Activated T-helper 1 cell treated with anti-CD3 and anti-CD28 coated beads, Interleukin-12 subunit alpha, Interleukin-12 subunit beta, Interleukin-2, Interleukin-4 antibody, amounts not matched to agents 30 ng/mL and 10 ng/mL and 1 ng/mL, durations not matched to agents 14 hours and 24 hours and 36 hours (primary cell): ENCODE measurements at regions of chr2 and their contacts with region 1.

Region 1: DNA sequence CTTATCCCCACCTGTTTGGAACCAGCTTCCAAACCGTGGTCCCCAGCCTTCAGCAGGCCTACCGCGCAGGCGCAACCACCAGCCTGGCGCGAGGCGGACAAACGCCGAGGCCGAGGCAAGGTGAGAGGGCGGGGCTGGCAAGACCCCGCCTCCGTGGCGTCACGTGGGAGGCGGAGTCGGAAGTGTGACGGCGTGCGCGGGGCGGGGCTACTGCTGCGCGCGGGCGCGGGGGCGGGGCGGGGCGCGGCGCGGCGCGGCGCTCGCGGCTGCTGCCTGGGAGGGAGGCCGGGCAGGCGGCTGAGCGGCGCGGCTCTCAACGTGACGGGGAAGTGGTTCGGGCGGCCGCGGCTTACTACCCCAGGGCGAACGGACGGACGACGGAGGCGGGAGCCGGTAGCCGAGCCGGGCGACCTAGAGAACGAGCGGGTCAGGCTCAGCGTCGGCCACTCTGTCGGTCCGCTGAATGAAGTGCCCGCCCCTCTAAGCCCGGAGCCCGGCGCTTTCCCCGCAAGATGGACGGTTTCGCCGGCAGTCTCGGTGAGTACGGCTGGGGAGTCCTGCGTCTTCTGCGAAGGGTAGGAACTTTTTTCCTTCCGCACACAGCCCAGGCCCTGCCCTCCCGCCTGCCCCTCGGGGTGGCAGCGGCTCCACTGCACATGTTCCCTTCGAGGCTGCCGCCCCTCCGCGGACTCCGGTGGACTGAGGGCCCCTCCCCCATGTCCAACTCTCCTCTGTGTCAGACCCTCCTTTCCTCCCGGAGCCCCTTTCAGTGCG is at the start of gene EML4:
- DNase-seq: peak; percentile 88
- H3K4me3 Mint-ChIP-seq: no peak within 1 kb of the TSS
- H3K27ac Mint-ChIP-seq: peak within 1 kb of the TSS; percentile 71
- H3K4me1 Mint-ChIP-seq: peaks cover 9% of the 10 kb centered on the region
- H3K27me3 Mint-ChIP-seq: peaks cover under 1% of the 10 kb centered on the region
- total RNA-seq, gene EML4: 56.7 and 58.9 TPM in 2 replicates

Region 2: DNA sequence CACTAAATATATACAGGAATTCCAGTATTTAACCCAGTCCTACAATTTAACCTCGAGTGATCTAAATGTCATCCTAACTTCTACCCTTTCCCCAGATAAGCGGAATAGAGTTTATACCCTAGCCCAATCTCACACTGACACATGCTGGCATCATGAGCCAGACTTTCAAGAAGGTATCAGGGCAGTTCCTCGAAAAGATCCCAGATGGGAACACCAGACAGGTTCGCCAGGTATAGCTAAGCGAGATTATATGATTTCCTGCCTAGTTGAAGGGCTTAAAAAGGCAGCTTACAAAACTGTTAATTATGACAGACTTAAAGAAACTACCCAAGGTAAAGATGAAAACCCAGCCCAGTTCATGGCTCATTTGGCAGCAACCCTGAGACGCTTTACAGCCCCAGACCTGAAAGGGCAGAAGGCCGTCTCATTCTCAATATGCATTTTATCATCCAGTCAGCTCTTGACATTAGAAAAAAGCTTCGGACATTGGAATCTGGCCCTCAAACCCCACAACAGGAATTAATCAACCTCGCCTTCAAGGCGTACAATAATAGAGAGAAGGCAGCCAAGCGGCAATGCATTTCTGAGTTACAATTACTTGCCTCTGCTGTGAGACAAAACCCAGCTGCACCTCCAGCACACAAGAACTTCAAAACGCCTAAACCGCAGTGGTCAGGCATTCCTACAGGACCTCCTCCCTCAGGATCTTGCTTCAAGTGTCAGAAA is 789.6 kb before region 1 on chr2:
- intact Hi-C with region 1: no loop called
- DNase-seq: no peak
- H3K4me3 Mint-ChIP-seq: no peak overlapping the region
- H3K27ac Mint-ChIP-seq: no peak overlapping the region
- H3K4me1 Mint-ChIP-seq: no peaks in the 10 kb centered on the region
- H3K27me3 Mint-ChIP-seq: no peaks in the 10 kb centered on the region

Region 3: GRCh38 chr2:41869542-41870264 is 299.6 kb before region 1 on chr2:
- intact Hi-C with region 1: no loop called
- DNase-seq: peak; percentile 32
- H3K4me3 Mint-ChIP-seq: no peak overlapping the region
- H3K27ac Mint-ChIP-seq: no peak overlapping the region
- H3K4me1 Mint-ChIP-seq: no peaks in the 10 kb centered on the region
- H3K27me3 Mint-ChIP-seq: peaks cover 12% of the 10 kb centered on the region

Region 4: DNA sequence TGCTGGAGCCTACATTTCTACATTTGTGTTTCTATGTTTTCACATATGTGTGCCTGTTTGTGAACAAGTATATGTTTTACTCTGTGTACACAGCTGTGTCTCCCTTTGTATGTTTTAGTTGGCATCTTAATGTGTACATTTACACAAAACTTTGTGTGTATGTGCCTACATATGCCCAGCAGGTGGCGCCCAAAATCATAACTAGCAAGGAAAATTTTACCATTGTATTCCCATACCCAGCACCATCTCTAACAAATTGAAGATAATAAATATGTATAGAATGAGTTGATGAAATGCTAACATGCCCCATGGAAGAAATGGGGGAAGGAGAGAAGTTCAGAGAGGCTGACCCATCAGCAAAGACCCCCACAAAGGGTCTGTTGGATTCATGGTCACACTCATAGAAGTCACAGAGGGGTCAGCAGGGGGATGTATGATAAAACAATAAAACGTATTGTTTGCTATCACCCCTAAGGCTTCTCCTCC is 73.3 kb before region 1 on chr2:
- intact Hi-C with region 1: loop called (anchors 1 kb)
- DNase-seq: peak; percentile 46
- H3K4me3 Mint-ChIP-seq: no peak overlapping the region
- H3K27ac Mint-ChIP-seq: no peak overlapping the region
- H3K4me1 Mint-ChIP-seq: peaks cover 46% of the 10 kb centered on the region
- H3K27me3 Mint-ChIP-seq: peaks cover 18% of the 10 kb centered on the region

Region 5: GRCh38 chr2:42132966-42133641 is 36.2 kb before region 1 on chr2:
- intact Hi-C with region 1: loop called (anchors 1 kb)
- DNase-seq: peak; percentile 87
- H3K4me3 Mint-ChIP-seq: peak overlapping the region; percentile 67
- H3K27ac Mint-ChIP-seq: peak overlapping the region; percentile 95
- H3K4me1 Mint-ChIP-seq: peaks cover 90% of the 10 kb centered on the region
- H3K27me3 Mint-ChIP-seq: no peaks in the 10 kb centered on the region

Region 6: DNA sequence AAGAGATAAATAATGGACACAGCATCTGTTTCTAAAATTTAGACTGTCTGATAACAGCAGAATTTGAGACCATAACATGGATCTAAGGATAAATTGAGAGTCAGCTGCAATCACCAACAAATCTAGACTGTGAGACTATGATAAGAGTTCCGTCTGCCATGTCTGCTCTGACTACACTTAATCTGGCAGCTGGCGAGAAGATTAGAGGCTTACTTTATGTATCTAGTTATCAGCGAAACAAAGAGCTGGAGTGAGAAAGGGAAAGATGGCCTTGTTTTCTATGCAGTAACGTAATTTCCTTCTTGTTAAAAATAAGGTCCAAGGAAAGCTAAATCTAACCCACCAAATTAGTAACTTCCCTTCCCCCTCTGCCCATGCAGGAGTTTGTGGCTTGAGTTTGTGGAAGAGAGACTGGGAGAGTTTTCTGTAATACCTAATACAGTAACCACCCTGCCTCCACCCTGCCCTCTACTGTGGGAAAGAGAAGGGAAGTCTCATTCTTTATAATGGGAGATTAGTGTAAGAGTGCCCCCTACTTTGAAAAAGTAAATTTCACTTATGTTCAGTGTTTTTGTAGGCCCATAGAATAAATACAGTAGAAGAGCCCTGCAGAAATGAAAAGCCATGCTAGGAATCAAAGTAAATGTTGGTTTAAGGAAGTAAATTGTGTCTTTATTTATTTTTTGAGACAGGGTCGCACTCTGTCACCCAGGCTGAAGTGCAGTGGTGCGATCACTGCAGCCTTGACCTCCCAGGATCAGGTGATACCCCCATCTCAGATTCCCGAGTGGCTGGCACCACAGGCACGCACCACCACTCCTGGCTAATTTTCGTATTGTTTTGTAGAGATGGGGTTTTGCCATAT is 27.3 kb after region 1 on chr2:
- intact Hi-C with region 1: loop called (anchors 1 kb)
- DNase-seq: peak; percentile 11
- H3K4me3 Mint-ChIP-seq: no peak overlapping the region
- H3K27ac Mint-ChIP-seq: no peak overlapping the region
- H3K4me1 Mint-ChIP-seq: peaks cover 61% of the 10 kb centered on the region
- H3K27me3 Mint-ChIP-seq: no peaks in the 10 kb centered on the region